ENCODE measurements at regions of chr5 and their contacts with region 1.

Region 1: DNA sequence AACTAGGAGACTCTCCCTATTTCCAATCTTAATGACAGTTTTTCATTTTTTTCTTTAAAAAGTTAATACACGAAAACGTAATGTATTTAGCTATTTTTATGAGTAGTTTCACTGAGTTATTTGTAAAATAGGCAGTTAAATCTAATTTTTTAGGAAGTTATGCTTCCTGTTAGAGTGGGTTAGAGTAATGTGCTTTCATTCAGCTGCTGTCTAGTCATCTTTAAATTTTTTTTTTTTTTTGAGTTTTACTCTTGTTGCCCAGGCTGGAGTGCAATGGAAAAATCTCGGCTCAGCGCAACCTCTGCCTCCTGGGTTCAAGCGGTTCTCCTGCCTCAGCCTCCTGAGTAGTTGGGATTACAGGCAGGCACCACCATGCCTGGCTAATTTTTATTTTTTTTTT is 34.0 kb downstream of the CDC42SE2 start:
- DNase-seq: no peak
- ATAC-seq: no peak
- H3K4me3 ChIP-seq: no peak overlapping the region
- H3K27ac ChIP-seq: no peak overlapping the region
- H3K4me1 ChIP-seq: no peaks in the 10 kb centered on the region; the same call in 1 of the 2 replicates
- H3K27me3 ChIP-seq: no peaks in the 10 kb centered on the region
- CTCF ChIP-seq: no peak
- POLR2A ChIP-seq: no peak
- RAD21 ChIP-seq: no peak

Region 2: DNA sequence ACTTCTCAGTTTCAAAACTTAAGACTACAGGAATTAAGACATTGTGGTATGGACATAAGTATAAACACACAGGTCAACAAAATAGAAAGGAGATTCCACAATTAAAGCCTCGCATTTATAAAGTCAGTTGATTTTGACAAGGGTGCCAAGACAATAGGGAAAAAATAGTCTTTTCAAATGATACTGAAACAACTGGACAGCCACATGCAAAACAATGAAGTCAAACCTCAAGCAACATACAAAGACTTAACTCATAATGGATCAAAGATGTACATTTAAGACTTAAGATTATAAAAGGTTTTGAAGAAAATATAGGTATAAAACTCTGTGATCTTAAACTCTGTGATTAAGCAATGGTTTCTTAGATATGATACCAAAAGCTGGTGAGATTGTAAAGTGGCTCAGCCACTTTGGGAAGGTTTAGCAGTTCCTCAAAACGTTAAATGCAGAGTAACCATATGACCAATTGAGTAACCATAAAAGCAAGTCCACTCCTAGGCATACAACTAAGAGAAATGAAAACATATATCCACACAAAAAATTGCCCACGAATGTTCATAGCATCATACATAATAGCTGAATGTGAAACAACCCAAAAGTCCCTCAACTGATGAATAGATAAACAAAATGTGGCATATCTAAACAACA is 154.8 kb before region 1 on chr5:
- CTCF ChIA-PET with region 1: interaction called, 13 read pairs
- POLR2A ChIA-PET with region 1: no interaction called
- dilution Hi-C with region 1: no loop called
- in situ Hi-C with region 1: no loop called
- intact Hi-C with region 1: no loop called
- DNase-seq: no peak
- ATAC-seq: no peak
- H3K4me3 ChIP-seq: no peak overlapping the region
- H3K27ac ChIP-seq: no peak overlapping the region
- H3K4me1 ChIP-seq: peaks cover 3% of the 10 kb centered on the region; the same call in 1 of the 2 replicates
- H3K27me3 ChIP-seq: no peaks in the 10 kb centered on the region
- CTCF ChIP-seq: no peak
- POLR2A ChIP-seq: no peak
- RAD21 ChIP-seq: no peak

Region 3: DNA sequence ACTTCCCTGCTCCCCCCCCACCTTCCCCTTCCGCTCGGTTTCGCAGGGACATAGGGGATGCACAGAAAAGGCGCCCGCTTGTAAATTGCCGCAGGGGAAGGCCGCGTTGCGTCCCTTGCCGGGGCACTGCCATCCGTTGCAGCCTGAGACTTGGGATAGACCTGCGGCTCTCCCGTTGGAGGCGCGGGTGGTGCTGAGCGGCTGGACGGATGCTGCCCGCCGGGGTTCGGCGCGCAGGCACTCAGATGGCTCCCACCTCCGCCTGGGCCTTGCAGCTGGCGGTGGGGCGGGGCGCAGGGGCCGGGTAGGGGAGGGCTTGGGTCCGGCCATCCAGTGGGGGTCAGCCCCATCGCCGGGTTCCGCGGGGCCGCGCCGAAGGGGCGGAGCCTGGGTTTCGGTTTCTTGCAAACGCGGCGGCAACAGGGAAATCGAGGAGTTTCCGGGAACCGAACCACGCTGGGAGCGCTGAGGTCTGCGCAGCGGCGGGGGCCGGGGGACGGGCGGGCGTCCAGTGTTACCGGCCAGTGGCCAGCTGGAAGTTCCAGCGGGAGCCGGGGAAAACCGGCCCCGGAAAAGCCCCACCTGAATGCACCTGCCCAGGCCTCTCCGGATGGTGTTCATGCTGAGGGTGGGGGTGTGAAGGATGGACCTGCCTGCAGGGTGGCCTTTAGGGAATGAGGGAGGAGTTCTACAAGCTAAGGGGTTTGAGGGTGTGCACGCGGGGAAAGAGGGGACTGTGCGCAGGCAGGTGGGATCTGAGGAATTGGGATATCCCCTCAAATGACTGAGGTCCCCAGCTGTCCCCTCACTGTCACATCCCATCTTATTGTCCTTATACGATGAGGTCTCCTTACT is 1199.0 kb after region 1 on chr5:
- CTCF ChIA-PET with region 1: no interaction called
- POLR2A ChIA-PET with region 1: no interaction called
- dilution Hi-C with region 1: no loop called
- in situ Hi-C with region 1: no loop called
- intact Hi-C with region 1: no loop called
- DNase-seq: peak; percentile 87
- ATAC-seq: peak; percentile 75
- H3K4me3 ChIP-seq: peak overlapping the region; percentile 59
- H3K27ac ChIP-seq: peak overlapping the region; percentile 96
- H3K4me1 ChIP-seq: peaks cover 23% of the 10 kb centered on the region
- H3K27me3 ChIP-seq: no peaks in the 10 kb centered on the region
- CTCF ChIP-seq: no peak
- POLR2A ChIP-seq: no peak
- RAD21 ChIP-seq: no peak